CD4-positive, alpha-beta memory T cell (primary cell): ENCODE measurements at regions of chr16 and their contacts with region 1.

Region 1: DNA sequence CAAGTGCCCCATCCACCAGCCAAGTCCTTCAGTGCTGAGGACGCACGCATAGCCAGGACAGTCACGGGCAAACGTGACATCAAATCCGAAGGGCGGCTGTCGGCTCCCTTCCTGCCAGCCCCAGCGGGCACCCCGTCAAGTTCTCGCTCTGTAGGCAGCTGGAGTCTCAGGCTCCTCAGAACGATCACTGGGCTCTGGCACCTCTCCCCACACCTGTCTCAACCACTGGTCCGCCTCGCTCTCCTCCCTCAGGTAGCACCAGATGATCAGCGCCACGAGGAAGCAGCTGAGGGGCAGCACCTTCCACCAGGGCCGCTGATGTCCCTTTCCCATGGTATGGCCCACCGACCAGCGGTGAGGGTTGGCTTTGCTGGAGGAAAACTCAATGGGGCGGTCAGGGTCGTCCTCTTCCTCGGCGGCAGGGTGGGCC is 421 bp downstream of the UQCC4 start:
- DNase-seq: no peak
- H3K4me3 ChIP-seq: peak overlapping the region; percentile 64 to 78
- H3K4me3 Mint-ChIP-seq: peak overlapping the region; percentile 79 to 97 (median 92)
- H3K27ac ChIP-seq: peak overlapping the region; percentile 85
- H3K27ac Mint-ChIP-seq: peak overlapping the region; percentile 64 to 100 (median 91)
- H3K4me1 ChIP-seq: peaks cover 12% of the 10 kb centered on the region
- H3K4me1 Mint-ChIP-seq: peaks cover 5 to 29% (median 15%) of the 10 kb centered on the region in 4 donors
- H3K27me3 ChIP-seq: no peaks in the 10 kb centered on the region
- H3K27me3 Mint-ChIP-seq: peaks cover 0 to 3% of the 10 kb centered on the region in 2 donors

Region 2: DNA sequence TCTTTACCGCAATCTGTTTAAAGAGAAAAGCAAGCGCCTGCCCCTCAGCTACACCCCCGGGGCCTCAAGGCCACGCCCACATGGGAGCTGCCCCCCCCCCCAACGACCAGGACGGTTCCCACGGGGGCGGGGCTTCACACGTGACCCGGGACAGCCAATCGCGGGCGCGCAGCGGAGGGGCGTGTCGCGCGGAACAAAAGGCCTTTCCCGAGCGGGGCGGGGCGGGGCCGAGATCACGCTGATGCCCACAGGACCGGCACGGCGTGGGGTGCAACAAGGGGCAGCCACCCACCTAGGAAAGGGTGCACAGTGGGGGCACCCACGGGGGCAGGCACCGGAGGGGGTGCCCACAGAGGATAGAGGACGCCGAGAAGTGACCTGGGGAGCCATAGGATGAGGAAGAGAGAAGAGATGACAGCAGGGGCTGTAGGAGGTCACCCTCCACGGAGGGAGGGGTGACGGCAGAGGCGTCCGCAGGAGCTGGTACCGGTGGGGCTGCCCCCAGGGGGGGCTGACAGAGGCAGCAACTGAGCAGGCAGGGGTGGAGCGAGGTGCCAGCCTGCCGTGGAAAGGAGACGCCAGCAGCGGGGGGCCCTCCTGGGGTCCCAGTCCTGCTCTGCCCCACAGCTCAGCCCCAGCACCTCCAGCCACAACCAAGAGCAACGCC is 11.8 kb before region 1 on chr16:
- CTCF ChIA-PET with region 1: no interaction called
- POLR2A ChIA-PET with region 1: interaction called, 15 read pairs
- intact Hi-C with region 1: loop called (anchors 1 kb)
- DNase-seq: peak; percentile 90 to 96 (median 92)
- H3K4me3 ChIP-seq: peak overlapping the region in 1 of 2 donors; percentile 38
- H3K4me3 Mint-ChIP-seq: peak overlapping the region; percentile 43 to 81 (median 72)
- H3K27ac ChIP-seq: peak overlapping the region; percentile 10
- H3K27ac Mint-ChIP-seq: peak overlapping the region in 6 of 7 donors; percentile 24 to 78 (median 60)
- H3K4me1 ChIP-seq: peaks cover 27% of the 10 kb centered on the region
- H3K4me1 Mint-ChIP-seq: peaks cover 9 to 52% (median 20%) of the 10 kb centered on the region in 4 donors
- H3K27me3 ChIP-seq: no peaks in the 10 kb centered on the region
- H3K27me3 Mint-ChIP-seq: no peaks in the 10 kb centered on the region

Region 3: GRCh38 chr16:1450218-1450617 is 30.1 kb after region 1 on chr16:
- CTCF ChIA-PET with region 1: no interaction called
- POLR2A ChIA-PET with region 1: no interaction called
- intact Hi-C with region 1: no loop called
- DNase-seq: no peak
- H3K4me3 ChIP-seq: no peak overlapping the region
- H3K4me3 Mint-ChIP-seq: no peak overlapping the region
- H3K27ac ChIP-seq: no peak overlapping the region
- H3K27ac Mint-ChIP-seq: no peak overlapping the region
- H3K4me1 ChIP-seq: no peaks in the 10 kb centered on the region
- H3K4me1 Mint-ChIP-seq: no peaks in the 10 kb centered on the region
- H3K27me3 ChIP-seq: no peaks in the 10 kb centered on the region
- H3K27me3 Mint-ChIP-seq: no peaks in the 10 kb centered on the region

Region 4: GRCh38 chr16:1474796-1475551 is 54.8 kb after region 1 on chr16 and contains the start of gene CLCN7:
- CTCF ChIA-PET with region 1: interaction called, 3 read pairs
- POLR2A ChIA-PET with region 1: no interaction called
- intact Hi-C with region 1: loop called (anchors 1 kb)
- DNase-seq: peak; percentile 83 to 87 (median 85)
- H3K4me3 ChIP-seq: peak within 1 kb of the TSS; percentile 49 to 74
- H3K4me3 Mint-ChIP-seq: peak within 1 kb of the TSS; percentile 80 to 91 (median 84)
- H3K27ac ChIP-seq: peak within 1 kb of the TSS; percentile 91
- H3K27ac Mint-ChIP-seq: peak within 1 kb of the TSS; percentile 85 to 93 (median 91)
- H3K4me1 ChIP-seq: peaks cover 25% of the 10 kb centered on the region
- H3K4me1 Mint-ChIP-seq: peaks cover 8 to 46% (median 30%) of the 10 kb centered on the region in 4 donors
- H3K27me3 ChIP-seq: no peaks in the 10 kb centered on the region
- H3K27me3 Mint-ChIP-seq: peaks cover 0 to 3% of the 10 kb centered on the region in 2 donors
- total RNA-seq, gene CLCN7: 105 to 111 TPM

Region 5: GRCh38 chr16:1543085-1543896 is 123.2 kb after region 1 on chr16:
- CTCF ChIA-PET with region 1: no interaction called
- POLR2A ChIA-PET with region 1: interaction called, 23 read pairs
- intact Hi-C with region 1: loop called (anchors 5 kb)
- DNase-seq: peak in 4 of 5 donors; percentile 15 to 76 (median 38)
- H3K4me3 ChIP-seq: peak overlapping the region in 1 of 2 donors; percentile 6
- H3K4me3 Mint-ChIP-seq: peak overlapping the region in 7 of 8 donors; percentile 72 to 84 (median 79)
- H3K27ac ChIP-seq: peak overlapping the region; percentile 42
- H3K27ac Mint-ChIP-seq: peak overlapping the region; percentile 27 to 94 (median 80)
- H3K4me1 ChIP-seq: peaks cover 85% of the 10 kb centered on the region
- H3K4me1 Mint-ChIP-seq: peaks cover 29 to 90% (median 66%) of the 10 kb centered on the region in 4 donors
- H3K27me3 ChIP-seq: no peaks in the 10 kb centered on the region
- H3K27me3 Mint-ChIP-seq: no peaks in the 10 kb centered on the region

Region 6: DNA sequence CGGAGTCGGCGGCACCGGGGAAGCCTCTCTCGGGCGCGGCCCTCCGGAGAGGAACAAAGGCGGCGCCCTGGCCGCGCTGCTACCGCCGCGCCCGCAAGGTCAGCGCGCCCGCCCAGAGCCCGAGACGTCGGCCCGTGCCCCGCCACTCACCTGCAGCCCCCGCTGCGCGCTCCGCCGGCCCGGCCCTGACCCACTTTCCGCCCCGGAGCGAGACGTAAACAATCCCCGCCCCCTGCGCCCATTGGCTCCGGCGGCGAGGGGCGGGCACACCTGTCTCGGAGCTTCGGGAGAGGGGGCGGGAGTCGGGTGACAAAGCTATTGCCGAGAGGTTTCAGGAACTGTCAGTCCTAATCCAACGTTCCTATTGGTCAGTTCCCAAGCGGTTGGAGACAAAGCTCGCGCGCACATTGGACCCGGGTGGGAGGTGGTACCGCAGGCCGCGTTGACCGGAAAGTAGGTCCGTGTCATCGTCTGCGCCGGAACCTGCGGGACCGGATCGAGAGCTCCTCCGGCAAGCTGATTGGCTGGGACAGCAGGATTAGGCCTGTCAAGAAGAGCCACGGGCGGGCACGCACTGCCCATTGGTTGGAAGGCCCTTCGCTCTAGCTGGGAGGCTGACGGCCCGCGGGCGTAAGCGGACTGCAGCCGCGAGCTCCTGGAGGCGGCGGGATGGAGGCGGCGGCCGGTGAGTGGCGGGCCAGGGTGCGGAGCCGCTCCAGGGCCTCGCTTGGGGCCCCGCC is 362.4 kb after region 1 on chr16 and contains the starts of genes NUBP2 and SPSB3:
- CTCF ChIA-PET with region 1: no interaction called
- POLR2A ChIA-PET with region 1: interaction called, 27 read pairs
- intact Hi-C with region 1: loop called (anchors 1 kb)
- DNase-seq: peak; percentile 97 to 99 (median 99)
- H3K4me3 ChIP-seq: peak within 1 kb of the TSS; percentile 69 to 88
- H3K4me3 Mint-ChIP-seq: peak within 1 kb of the TSS; percentile 91 to 96 (median 94)
- H3K27ac ChIP-seq: peak within 1 kb of the TSS; percentile 79
- H3K27ac Mint-ChIP-seq: peak within 1 kb of the TSS; percentile 92 to 97 (median 94)
- H3K4me1 ChIP-seq: peaks cover 43% of the 10 kb centered on the region
- H3K4me1 Mint-ChIP-seq: peaks cover 13 to 46% (median 30%) of the 10 kb centered on the region in 4 donors
- H3K27me3 ChIP-seq: no peaks in the 10 kb centered on the region
- H3K27me3 Mint-ChIP-seq: no peaks in the 10 kb centered on the region
- total RNA-seq, gene NUBP2: 55.9 to 59.4 TPM
- total RNA-seq, gene SPSB3: 133 to 144 TPM